Ovary (tissue), 10 donors: ENCODE measurements at regions of chr22 and their contacts with region 1.

Region 1: GRCh38 chr22:36775964-36776669 is at the start of gene IFT27:
- DNase-seq: peak; percentile 96 to 100 (median 98)
- H3K4me3 ChIP-seq: peak within 1 kb of the TSS; percentile 98
- H3K27ac ChIP-seq: peak within 1 kb of the TSS; percentile 71 to 89
- H3K4me1 ChIP-seq: peaks cover 5% of the 10 kb centered on the region
- H3K27me3 ChIP-seq: no peaks in the 10 kb centered on the region
- CTCF ChIP-seq: no peak
- EP300 ChIP-seq: no peak
- POLR2A ChIP-seq: peak; percentile 26
- total RNA-seq, gene IFT27: 26.0 to 38.8 (median 29.5) TPM

Region 2: DNA sequence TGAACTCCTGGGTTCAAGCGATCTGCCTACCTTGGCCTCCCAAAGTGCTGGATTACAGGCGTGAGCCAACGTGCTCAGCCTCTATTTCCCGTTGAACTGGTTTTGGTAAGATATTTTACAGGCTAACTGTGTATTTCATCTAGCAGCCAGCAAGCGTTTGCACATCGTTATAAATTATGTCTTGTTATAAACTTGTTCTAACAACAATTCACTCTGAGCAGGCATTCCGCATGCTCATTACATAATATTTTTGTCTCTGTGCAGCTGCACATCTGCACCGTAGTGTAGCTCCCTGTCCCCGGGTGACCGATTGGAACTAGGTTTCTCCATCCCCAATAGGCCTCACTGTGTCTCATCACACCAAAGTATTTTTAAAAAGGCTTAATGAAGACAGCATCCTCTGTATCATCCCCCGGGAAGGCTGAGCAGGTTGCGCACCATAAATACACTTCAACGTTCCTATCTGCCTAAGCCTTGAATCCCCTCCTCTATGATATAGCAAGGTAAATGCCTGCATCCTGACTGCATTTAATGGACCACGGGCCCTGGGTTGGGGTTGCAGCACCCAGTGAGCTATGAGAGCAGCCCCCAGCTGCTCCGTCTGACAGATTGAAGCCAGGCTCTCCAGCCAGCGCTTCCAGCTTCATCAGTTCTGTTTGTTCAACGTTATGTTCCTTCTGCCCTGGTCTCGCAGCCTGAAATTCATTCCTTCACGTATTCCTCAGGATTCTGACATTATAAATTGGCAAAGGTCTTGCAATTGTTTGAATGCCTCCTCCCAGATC is 195.4 kb after region 1 on chr22:
- intact Hi-C with region 1: loop called in 3 of 4 experiments (anchors 5 to 10 kb)
- DNase-seq: no peak
- H3K4me3 ChIP-seq: no peak overlapping the region
- H3K27ac ChIP-seq: no peak overlapping the region
- H3K4me1 ChIP-seq: no peaks in the 10 kb centered on the region
- H3K27me3 ChIP-seq: no peaks in the 10 kb centered on the region
- CTCF ChIP-seq: no peak
- EP300 ChIP-seq: no peak
- POLR2A ChIP-seq: no peak

Region 3: GRCh38 chr22:37051391-37052385 is 275.6 kb after region 1 on chr22 and contains the start of gene KCTD17:
- intact Hi-C with region 1: loop called in 2 of 4 experiments (anchors 10 kb)
- DNase-seq: peak; percentile 55 to 81 (median 71)
- H3K4me3 ChIP-seq: peak within 1 kb of the TSS; percentile 57
- H3K27ac ChIP-seq: peak within 1 kb of the TSS; percentile 15 to 52
- H3K4me1 ChIP-seq: peaks cover 5% of the 10 kb centered on the region
- H3K27me3 ChIP-seq: no peaks in the 10 kb centered on the region
- CTCF ChIP-seq: no peak
- EP300 ChIP-seq: no peak
- POLR2A ChIP-seq: peak; percentile 56
- total RNA-seq, gene KCTD17: 15.9 to 34.7 (median 28.7) TPM